CD8-positive, alpha-beta T cell (primary cell): ENCODE measurements at regions of chr9 and their contacts with region 1.

Region 1: DNA sequence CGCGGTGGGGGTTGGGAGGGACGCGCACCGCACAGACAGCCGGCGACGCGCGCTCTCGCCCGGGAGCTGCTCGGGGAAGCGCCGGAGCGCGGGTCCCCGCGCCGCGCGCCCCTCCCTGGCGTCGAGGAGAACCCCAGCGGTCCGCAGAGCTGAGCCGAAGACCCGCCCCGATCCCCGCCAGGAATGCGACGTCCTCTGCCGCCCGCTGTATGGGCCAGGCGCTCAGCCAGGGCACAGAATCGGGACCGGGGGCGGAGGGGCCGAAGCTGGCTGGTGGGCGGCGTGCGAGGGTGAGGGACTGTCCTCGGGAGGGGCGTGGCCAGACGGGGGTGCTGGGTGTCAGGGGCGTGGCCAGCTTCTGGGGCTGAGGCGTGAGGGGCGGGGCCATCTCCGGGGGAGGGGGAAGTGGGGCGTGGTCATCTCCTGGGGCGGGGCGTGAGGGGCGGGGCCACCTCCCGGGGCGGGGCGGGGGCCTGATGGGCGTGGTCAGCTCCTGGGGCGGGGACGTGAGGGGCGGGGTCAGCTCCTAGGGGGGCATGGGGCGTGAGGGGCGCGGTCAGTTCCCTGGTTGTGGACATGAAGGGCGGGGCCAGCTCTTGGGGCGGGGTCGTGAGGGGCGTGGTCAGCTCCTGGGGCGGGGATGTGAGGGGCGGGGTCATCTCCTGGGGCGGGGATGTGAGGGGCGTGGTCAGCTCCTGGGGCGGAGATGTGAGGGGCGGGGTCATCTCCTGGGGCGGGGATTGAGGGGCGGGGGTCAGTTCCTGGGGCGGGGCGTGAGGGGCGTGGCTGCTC is 965 bp downstream of the PTGDS start:
- DNase-seq: peak; percentile 47 to 87 (median 73)
- ATAC-seq: peak; percentile 81
- H3K4me3 ChIP-seq: peak overlapping the region; percentile 26 to 55
- H3K4me3 Mint-ChIP-seq: peak overlapping the region; percentile 51
- H3K27ac ChIP-seq: no peak overlapping the region
- H3K27ac Mint-ChIP-seq: no peak overlapping the region
- H3K4me1 ChIP-seq: peaks cover 37% of the 10 kb centered on the region
- H3K4me1 Mint-ChIP-seq: peaks cover 21% of the 10 kb centered on the region
- H3K27me3 ChIP-seq: no peaks in the 10 kb centered on the region
- H3K27me3 Mint-ChIP-seq: no peaks in the 10 kb centered on the region
- CTCF ChIP-seq: no peak

Region 2: GRCh38 chr9:136799854-136800657 is 178.2 kb before region 1 on chr9:
- CTCF ChIA-PET with region 1: no interaction called
- POLR2A ChIA-PET with region 1: no interaction called
- intact Hi-C with region 1: loop called in 1 of 2 experiments (anchors 1 kb)
- DNase-seq: peak; percentile 73 to 96 (median 92)
- ATAC-seq: peak; percentile 83
- H3K4me3 ChIP-seq: peak overlapping the region; percentile 61 to 75
- H3K4me3 Mint-ChIP-seq: peak overlapping the region; percentile 82
- H3K27ac ChIP-seq: peak overlapping the region in 1 of 2 experiments; percentile 35
- H3K27ac Mint-ChIP-seq: peak overlapping the region; percentile 60
- H3K4me1 ChIP-seq: peaks cover 35% of the 10 kb centered on the region
- H3K4me1 Mint-ChIP-seq: peaks cover 29% of the 10 kb centered on the region
- H3K27me3 ChIP-seq: peaks cover 0 to 2% of the 10 kb centered on the region in 2 experiments
- H3K27me3 Mint-ChIP-seq: no peaks in the 10 kb centered on the region
- CTCF ChIP-seq: no peak

Region 3: DNA sequence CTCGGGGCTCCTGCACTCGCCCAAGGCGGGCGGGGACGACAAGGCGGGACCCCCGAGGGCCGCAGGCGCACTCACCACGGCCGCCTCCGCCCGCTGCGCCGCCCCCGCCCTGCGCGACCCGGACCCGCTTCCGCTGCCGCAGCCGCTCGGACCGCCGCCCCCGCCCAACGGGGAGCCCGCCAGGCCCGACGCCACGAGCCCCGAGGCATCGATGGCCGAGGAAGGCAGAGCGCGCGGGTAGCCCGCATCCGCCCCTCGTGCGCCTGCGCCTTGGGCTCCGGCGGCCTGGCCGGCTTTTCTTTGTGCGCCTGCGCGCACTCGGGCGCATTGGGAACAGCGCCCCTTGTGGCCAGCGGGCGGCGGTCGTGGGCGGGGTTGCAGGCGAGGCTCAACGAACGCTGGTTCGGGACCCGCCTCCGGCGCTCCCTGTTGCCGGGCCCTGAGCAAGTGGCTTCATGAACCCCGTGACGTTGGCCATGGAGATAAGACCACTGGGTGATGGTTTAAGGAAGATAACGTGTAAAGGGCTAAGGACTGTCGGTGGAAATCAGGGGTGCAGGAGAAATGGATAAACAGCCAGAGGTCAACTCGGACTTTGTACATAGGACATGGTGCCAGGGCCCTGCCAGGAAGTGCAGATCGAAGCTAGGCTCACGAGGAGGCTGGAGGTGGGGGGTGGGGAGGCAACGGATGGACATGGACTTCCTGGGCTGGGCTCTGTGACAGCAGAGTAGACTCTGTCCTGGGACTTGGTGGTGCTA is 33.6 kb before region 1 on chr9 and contains the starts of genes C8G and FBXW5:
- CTCF ChIA-PET with region 1: interaction called, 3 read pairs
- POLR2A ChIA-PET with region 1: interaction called, 4 read pairs
- intact Hi-C with region 1: loop called (anchors 1 kb)
- DNase-seq: peak; percentile 87 to 98 (median 93)
- ATAC-seq: peak; percentile 87
- H3K4me3 ChIP-seq: peak within 1 kb of the TSS; percentile 63 to 79
- H3K4me3 Mint-ChIP-seq: peak within 1 kb of the TSS; percentile 82
- H3K27ac ChIP-seq: peak within 1 kb of the TSS; percentile 28 to 48
- H3K27ac Mint-ChIP-seq: peak within 1 kb of the TSS; percentile 62
- H3K4me1 ChIP-seq: peaks cover 16% of the 10 kb centered on the region
- H3K4me1 Mint-ChIP-seq: peaks cover 12% of the 10 kb centered on the region
- H3K27me3 ChIP-seq: no peaks in the 10 kb centered on the region
- H3K27me3 Mint-ChIP-seq: no peaks in the 10 kb centered on the region
- CTCF ChIP-seq: peak; percentile 96
- total RNA-seq, gene C8G: not detected
- total RNA-seq, gene FBXW5: 38.4 to 39.5 TPM

Region 4: GRCh38 chr9:136949817-136950655 is 28.2 kb before region 1 on chr9:
- CTCF ChIA-PET with region 1: interaction called, 3 read pairs
- POLR2A ChIA-PET with region 1: interaction called, 4 read pairs
- intact Hi-C with region 1: loop called (anchors 1 kb)
- DNase-seq: peak; percentile 93 to 98 (median 97)
- ATAC-seq: peak; percentile 96
- H3K4me3 ChIP-seq: peak overlapping the region; percentile 68 to 70
- H3K4me3 Mint-ChIP-seq: peak overlapping the region; percentile 85
- H3K27ac ChIP-seq: peak overlapping the region; percentile 65 to 75
- H3K27ac Mint-ChIP-seq: peak overlapping the region; percentile 90
- H3K4me1 ChIP-seq: peaks cover 11% of the 10 kb centered on the region
- H3K4me1 Mint-ChIP-seq: peaks cover 14% of the 10 kb centered on the region
- H3K27me3 ChIP-seq: no peaks in the 10 kb centered on the region
- H3K27me3 Mint-ChIP-seq: no peaks in the 10 kb centered on the region
- CTCF ChIP-seq: peak; percentile 51

Region 5: DNA sequence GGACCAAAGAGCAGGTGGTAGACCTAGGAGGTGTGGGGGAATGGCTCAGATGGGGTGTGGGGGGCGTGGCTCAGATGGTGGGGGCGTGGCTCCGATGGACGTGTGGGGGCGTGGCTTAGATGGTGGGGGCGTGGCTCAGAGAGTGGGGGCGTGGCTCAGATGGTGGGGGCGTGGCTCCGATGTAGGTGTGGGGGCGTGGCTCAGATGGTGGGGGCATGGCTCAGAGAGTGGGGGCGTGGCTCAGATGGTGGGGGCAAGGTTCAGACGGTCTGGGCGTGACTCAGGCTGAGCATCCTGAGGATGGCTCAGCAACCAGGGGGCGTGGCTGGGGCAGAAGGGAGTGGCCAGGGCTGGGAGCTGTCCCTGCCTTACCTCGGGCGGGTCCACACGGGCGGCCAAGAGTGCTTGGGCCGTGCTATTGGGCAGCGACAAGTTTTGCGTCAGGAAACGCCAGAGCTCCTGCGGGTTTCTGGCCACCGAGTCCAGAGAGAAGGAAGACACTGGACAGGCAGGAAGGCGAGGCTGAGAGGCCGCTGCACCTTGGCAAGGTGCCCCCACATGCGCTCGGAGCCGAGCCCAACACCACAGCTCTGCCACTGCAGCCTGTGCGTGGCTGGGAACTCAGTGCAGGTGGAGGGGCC is 43.8 kb after region 1 on chr9:
- CTCF ChIA-PET with region 1: interaction called, 4 read pairs
- POLR2A ChIA-PET with region 1: no interaction called
- intact Hi-C with region 1: loop called in 1 of 2 experiments (anchors 1 kb)
- DNase-seq: peak; percentile 33 to 87 (median 70)
- ATAC-seq: peak; percentile 92
- H3K4me3 ChIP-seq: no peak overlapping the region
- H3K4me3 Mint-ChIP-seq: no peak overlapping the region
- H3K27ac ChIP-seq: peak overlapping the region in 1 of 2 experiments; percentile 9
- H3K27ac Mint-ChIP-seq: no peak overlapping the region
- H3K4me1 ChIP-seq: peaks cover 18% of the 10 kb centered on the region
- H3K4me1 Mint-ChIP-seq: peaks cover 9% of the 10 kb centered on the region
- H3K27me3 ChIP-seq: no peaks in the 10 kb centered on the region
- H3K27me3 Mint-ChIP-seq: no peaks in the 10 kb centered on the region
- CTCF ChIP-seq: no peak

Region 6: GRCh38 chr9:137453643-137454081 is 475.4 kb after region 1 on chr9:
- CTCF ChIA-PET with region 1: no interaction called
- POLR2A ChIA-PET with region 1: no interaction called
- intact Hi-C with region 1: no loop called
- DNase-seq: peak in 7 of 9 experiments; percentile 1 to 67 (median 56)
- ATAC-seq: peak; percentile 63
- H3K4me3 ChIP-seq: no peak overlapping the region
- H3K4me3 Mint-ChIP-seq: no peak overlapping the region
- H3K27ac ChIP-seq: no peak overlapping the region
- H3K27ac Mint-ChIP-seq: peak overlapping the region; percentile 18
- H3K4me1 ChIP-seq: peaks cover 57% of the 10 kb centered on the region
- H3K4me1 Mint-ChIP-seq: peaks cover 37% of the 10 kb centered on the region
- H3K27me3 ChIP-seq: no peaks in the 10 kb centered on the region
- H3K27me3 Mint-ChIP-seq: no peaks in the 10 kb centered on the region
- CTCF ChIP-seq: no peak